Caco-2 (cell line): ENCODE measurements at regions of chr12 and their contacts with region 1.

Region 1: DNA sequence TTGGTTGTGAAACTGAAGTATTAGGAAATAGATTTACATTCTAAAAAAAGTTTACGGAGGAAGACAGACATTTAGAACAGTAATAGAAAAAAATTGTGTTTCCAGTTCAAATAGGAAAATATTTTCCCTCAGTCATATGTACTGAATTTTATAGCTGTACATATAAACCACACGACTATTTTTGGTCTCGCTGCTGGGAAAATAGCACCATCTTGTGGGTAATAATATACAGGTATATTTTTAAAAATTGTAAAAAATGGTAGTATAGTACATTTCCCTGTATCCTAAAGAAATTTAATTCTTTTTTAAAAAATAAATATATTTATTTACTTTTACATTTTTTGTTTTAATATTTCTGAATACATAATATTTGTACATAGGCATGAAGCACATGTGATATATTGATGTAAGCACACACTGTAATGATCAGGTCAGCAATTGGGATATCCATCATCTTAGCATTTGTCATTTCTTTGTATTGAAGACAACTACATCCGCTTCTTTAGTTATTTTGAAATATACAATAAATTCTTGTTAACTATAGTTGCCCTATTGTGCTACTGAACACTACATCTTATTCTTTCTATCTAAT is 168.6 kb downstream of the ALX1 start:
- DNase-seq: no peak
- H3K4me3 ChIP-seq: no peak overlapping the region
- H3K4me3 Mint-ChIP-seq: no peak overlapping the region
- H3K27ac Mint-ChIP-seq: no peak overlapping the region
- H3K4me1 ChIP-seq: peaks cover 17% of the 10 kb centered on the region
- H3K4me1 Mint-ChIP-seq: peaks cover 32% of the 10 kb centered on the region
- H3K27me3 ChIP-seq: no peaks in the 10 kb centered on the region
- H3K27me3 Mint-ChIP-seq: no peaks in the 10 kb centered on the region
- CTCF ChIP-seq: peak; percentile 28 to 64

Region 2: GRCh38 chr12:85155787-85156186 is 292.9 kb before region 1 on chr12:
- CTCF ChIA-PET with region 1: no interaction called
- POLR2A ChIA-PET with region 1: no interaction called
- intact Hi-C with region 1: loop called (anchors 1 kb)
- DNase-seq: no peak
- H3K4me3 ChIP-seq: no peak overlapping the region
- H3K4me3 Mint-ChIP-seq: no peak overlapping the region
- H3K27ac Mint-ChIP-seq: no peak overlapping the region
- H3K4me1 ChIP-seq: no peaks in the 10 kb centered on the region
- H3K4me1 Mint-ChIP-seq: no peaks in the 10 kb centered on the region
- H3K27me3 ChIP-seq: no peaks in the 10 kb centered on the region
- H3K27me3 Mint-ChIP-seq: no peaks in the 10 kb centered on the region
- CTCF ChIP-seq: peak; percentile 11 to 16

Region 3: DNA sequence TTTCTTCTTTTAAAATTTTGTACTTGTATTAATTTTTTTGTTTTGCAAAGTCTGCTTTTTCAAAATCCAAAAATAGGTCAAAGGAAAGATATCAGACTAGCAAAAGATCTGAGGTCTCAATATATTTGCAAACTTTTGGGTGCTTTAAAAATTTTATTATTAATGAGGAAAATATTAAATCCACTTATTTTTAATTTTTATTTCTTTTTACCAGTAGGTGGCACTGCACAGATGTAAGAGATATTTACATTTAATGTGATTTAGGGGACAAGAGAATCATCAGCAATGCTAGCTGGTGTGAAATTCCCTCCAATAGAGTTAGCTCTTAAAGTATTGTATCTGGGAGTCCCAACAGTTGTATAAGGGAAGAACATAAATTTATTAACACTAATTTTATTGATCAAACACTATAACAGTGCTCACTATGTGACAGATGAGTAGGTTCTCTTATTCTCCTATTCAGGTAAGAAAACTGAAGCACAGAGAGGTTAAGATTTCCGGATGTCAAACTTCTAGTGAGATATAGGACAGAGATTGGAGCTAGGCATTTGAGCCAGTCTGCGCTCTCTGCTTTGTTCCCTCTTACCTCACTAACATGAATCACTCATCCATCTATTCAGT is 138.1 kb before region 1 on chr12:
- CTCF ChIA-PET with region 1: no interaction called
- POLR2A ChIA-PET with region 1: no interaction called
- intact Hi-C with region 1: loop called (anchors 2 kb)
- DNase-seq: no peak
- H3K4me3 ChIP-seq: no peak overlapping the region
- H3K4me3 Mint-ChIP-seq: no peak overlapping the region
- H3K27ac Mint-ChIP-seq: no peak overlapping the region
- H3K4me1 ChIP-seq: no peaks in the 10 kb centered on the region
- H3K4me1 Mint-ChIP-seq: no peaks in the 10 kb centered on the region
- H3K27me3 ChIP-seq: no peaks in the 10 kb centered on the region
- H3K27me3 Mint-ChIP-seq: no peaks in the 10 kb centered on the region
- CTCF ChIP-seq: peak in 1 of 2 experiments; percentile 59

Region 4: DNA sequence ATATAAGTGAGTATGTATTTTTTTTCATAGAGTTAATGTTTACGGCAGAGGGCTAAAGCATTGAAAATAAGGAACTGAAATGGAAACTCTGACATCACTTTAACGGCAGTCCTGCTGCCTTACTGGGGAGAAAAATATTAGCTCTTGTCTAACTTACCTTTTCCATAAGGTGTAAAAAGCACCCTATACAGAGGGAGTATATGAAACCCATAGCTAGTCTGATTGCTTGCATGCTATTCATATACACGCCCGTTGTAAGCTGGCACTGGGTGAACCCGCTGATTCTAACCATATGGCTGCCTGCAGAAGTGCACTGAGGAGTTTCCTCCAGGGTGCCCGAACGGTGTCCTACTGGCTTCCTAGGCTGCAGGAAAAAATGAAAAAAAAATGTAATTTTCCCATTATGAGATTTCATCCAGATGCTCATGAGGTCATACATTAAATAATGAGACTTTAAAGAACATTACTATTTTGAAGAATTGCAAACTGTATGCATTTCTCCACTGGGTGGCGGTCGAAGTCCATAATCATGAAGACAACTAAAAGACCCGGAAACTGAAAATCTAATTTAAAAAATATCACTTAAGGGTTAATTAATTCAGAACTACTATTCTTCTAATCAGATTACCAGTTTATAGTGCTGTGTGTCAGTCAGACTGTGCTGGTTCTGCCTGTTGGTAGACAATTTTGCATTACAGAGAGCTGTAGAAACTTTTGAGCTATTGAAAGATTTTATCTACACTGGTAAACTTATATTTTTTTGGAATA is 23.9 kb before region 1 on chr12:
- CTCF ChIA-PET with region 1: interaction called, 38 read pairs
- POLR2A ChIA-PET with region 1: no interaction called
- intact Hi-C with region 1: loop called (anchors 1 kb)
- DNase-seq: peak; percentile 46 to 52
- H3K4me3 ChIP-seq: no peak overlapping the region
- H3K4me3 Mint-ChIP-seq: no peak overlapping the region
- H3K27ac Mint-ChIP-seq: no peak overlapping the region
- H3K4me1 ChIP-seq: peaks cover 29% of the 10 kb centered on the region
- H3K4me1 Mint-ChIP-seq: peaks cover 17% of the 10 kb centered on the region
- H3K27me3 ChIP-seq: no peaks in the 10 kb centered on the region
- H3K27me3 Mint-ChIP-seq: no peaks in the 10 kb centered on the region
- CTCF ChIP-seq: peak; percentile 59 to 72